Common myeloid progenitor, CD34-positive (primary cell): ENCODE measurements at regions of chr4 and their contacts with region 1.

Region 1: DNA sequence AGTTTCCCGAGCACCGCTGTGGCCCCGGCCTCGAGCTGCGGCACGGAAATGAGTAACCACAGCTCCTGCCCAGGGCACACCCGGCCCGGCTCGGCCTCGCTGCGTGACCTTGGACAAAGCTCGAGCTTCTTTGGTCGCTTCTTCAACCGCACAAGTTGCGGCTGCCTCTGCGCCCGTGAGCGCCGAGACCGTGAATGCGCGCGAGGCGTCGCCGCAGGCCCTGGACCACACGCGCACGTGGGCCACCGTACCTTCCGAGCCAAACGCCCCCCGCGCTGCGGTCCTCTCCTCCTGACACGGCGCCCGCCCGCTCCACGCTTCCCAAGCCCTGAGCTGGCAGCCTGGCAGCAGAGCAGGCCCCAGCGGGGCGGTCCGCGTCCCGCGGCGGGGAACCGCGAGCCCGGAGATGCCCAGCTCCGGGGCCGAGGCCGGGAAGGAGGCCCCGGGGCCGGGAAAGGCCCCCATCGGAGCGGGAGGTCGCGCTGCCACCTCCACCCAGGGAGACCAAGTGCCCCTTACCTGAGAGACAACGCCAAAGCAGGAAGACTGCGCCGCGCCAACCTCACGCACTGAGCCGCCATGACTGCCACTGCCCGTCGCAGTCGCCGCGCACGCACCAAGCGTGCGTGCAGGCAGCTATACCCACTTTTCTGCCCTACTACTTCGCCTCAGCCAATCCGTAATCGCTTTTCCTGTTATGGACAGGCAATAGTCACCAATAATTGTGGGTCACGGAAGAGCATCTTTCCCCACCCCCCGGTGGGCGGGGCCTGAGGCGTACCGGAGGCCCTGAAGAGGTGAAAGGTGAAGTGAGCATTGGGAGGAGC is at the start of gene GRPEL1:
- DNase-seq: peak; percentile 98 to 99 (median 99)
- H3K4me3 ChIP-seq: peak within 1 kb of the TSS; percentile 64 to 86 (median 77)
- H3K27ac ChIP-seq: peak within 1 kb of the TSS in 1 of 2 experiments; percentile 57
- H3K4me1 ChIP-seq: peaks cover 8 to 31% (median 28%) of the 10 kb centered on the region in 4 experiments
- H3K27me3 ChIP-seq: peaks cover 0 to 46% (median 12%) of the 10 kb centered on the region in 5 experiments

Region 2: DNA sequence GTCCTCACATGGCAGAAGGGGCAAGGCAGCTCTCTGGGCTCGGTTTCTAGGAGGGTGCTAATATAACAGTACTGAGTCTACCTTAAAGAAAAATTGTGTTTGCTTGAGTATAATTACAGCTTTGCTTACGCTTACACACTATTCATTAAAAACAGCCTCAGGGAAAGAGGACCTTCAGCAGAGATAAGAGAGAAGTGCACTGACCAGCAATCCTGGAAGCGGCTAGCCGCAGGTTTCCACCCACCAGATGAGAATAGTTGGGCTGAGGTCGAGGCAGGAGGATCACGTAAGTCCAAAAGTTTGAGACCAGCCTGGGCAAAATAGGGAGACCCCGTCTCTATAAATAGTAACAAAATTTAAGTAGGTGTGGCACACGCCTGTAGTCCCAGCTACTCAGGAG is 442.4 kb before region 1 on chr4:
- CTCF ChIA-PET with region 1: no interaction called
- POLR2A ChIA-PET with region 1: no interaction called
- DNase-seq: no peak
- H3K4me3 ChIP-seq: no peak overlapping the region
- H3K27ac ChIP-seq: no peak overlapping the region
- H3K4me1 ChIP-seq: no peaks in the 10 kb centered on the region
- H3K27me3 ChIP-seq: no peaks in the 10 kb centered on the region

Region 3: DNA sequence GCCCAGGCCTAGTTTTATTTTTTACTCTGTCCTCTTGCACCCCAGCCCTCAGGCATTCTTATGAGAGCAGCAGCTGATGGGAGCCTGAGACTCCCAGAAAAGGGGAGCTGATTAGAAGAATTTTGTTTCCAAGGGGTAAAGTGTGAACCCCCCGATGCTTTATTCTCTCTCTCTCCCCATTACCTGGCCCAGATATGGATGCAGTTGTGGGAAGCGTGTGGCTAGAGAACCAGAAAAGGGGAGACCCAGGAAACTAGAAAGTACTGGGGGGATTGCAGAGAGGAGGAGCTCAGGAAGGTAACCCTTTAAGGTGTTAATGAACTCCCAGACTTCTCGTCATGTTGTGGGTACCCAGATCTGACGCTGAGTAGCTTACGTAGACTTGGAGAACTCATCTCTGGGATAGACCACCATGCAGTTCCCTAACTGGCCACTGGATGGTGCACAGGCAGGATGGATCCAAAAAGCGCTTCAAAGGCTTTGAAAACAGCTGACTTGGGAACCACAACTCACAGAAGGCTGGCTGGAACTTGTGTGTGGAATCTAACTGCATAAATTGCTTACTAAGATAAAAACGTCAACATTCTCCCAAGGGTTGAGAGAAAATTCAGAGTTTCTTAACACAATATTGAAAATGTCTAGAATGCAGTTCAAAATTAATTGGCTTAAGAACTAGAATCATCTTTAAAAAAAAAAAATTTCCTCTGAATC is 93.4 kb before region 1 on chr4:
- CTCF ChIA-PET with region 1: interaction called, 39 read pairs
- POLR2A ChIA-PET with region 1: no interaction called
- DNase-seq: peak; percentile 83 to 89 (median 85)
- H3K4me3 ChIP-seq: no peak overlapping the region
- H3K27ac ChIP-seq: no peak overlapping the region
- H3K4me1 ChIP-seq: peaks cover 0 to 2% (median 0%) of the 10 kb centered on the region in 4 experiments
- H3K27me3 ChIP-seq: no peaks in the 10 kb centered on the region

Region 4: GRCh38 chr4:7042697-7043464 is 24.8 kb before region 1 on chr4 and contains the start of gene TADA2B:
- CTCF ChIA-PET with region 1: interaction called, 113 read pairs
- POLR2A ChIA-PET with region 1: no interaction called
- DNase-seq: peak; percentile 89 to 92 (median 91)
- H3K4me3 ChIP-seq: peak within 1 kb of the TSS; percentile 59 to 86 (median 76)
- H3K27ac ChIP-seq: peak within 1 kb of the TSS in 1 of 2 experiments; percentile 45
- H3K4me1 ChIP-seq: peaks cover 3 to 28% (median 26%) of the 10 kb centered on the region in 4 experiments
- H3K27me3 ChIP-seq: peaks cover 0 to 84% (median 46%) of the 10 kb centered on the region in 5 experiments

Region 5: DNA sequence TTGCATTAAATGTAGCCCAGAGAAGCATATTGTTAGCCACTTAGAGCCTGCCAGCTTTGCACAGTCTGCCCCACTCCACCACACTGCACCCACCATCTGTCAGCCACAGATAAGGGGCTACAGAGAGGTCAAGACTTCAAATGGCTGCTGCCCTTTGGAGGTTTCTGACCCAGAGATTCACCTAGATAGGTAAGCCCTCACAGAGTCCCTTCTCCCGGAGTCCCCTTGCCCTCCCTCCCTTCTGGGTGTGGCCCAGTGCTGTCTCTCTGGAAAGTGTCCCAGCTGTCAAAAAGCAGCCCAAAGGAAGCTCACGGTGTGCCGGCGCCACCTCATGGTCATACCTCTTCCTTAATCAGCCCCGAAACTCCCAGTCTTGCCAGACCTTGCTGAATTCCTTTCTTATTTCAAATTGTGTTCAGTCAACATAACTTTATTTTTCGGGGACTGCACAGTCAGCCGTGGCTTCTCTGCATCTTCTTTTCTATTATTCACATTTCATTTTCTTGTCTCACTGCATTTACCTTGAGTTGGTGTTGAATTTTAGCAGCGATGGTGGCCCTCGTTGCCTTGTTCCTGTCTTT is 14.3 kb after region 1 on chr4:
- CTCF ChIA-PET with region 1: interaction called, 70 read pairs
- POLR2A ChIA-PET with region 1: no interaction called
- DNase-seq: peak; percentile 60 to 73 (median 69)
- H3K4me3 ChIP-seq: no peak overlapping the region
- H3K27ac ChIP-seq: no peak overlapping the region
- H3K4me1 ChIP-seq: no peaks in the 10 kb centered on the region
- H3K27me3 ChIP-seq: peaks cover 0 to 52% (median 18%) of the 10 kb centered on the region in 5 experiments